H1 (cell line): ENCODE measurements at regions of chr7 and their contacts with region 1.

Region 1: GRCh38 chr7:139557857-139558581 is 34.5 kb downstream of the CLEC2L start:
- DNase-seq: no peak
- H3K4me3 ChIP-seq: no peak overlapping the region
- H3K27ac ChIP-seq: no peak overlapping the region
- H3K4me1 ChIP-seq: peaks cover 0 to 4% (median 2%) of the 10 kb centered on the region in 4 experiments; a peak in 4 of 7 replicates
- H3K27me3 ChIP-seq: no peaks in the 10 kb centered on the region
- CTCF ChIP-seq: peak; percentile 59 to 79 (median 69)
- EP300 ChIP-seq: no peak
- POLR2A ChIP-seq: no peak
- RAD21 ChIP-seq: peak; percentile 36 to 58

Region 2: GRCh38 chr7:139441961-139442360 is 116.1 kb before region 1 on chr7:
- CTCF ChIA-PET with region 1: no interaction called
- POLR2A ChIA-PET with region 1: no interaction called
- DNase-seq: no peak
- H3K4me3 ChIP-seq: no peak overlapping the region
- H3K27ac ChIP-seq: no peak overlapping the region
- H3K4me1 ChIP-seq: no peaks in the 10 kb centered on the region
- H3K27me3 ChIP-seq: no peaks in the 10 kb centered on the region
- CTCF ChIP-seq: no peak
- EP300 ChIP-seq: no peak
- POLR2A ChIP-seq: no peak
- RAD21 ChIP-seq: no peak

Region 3: DNA sequence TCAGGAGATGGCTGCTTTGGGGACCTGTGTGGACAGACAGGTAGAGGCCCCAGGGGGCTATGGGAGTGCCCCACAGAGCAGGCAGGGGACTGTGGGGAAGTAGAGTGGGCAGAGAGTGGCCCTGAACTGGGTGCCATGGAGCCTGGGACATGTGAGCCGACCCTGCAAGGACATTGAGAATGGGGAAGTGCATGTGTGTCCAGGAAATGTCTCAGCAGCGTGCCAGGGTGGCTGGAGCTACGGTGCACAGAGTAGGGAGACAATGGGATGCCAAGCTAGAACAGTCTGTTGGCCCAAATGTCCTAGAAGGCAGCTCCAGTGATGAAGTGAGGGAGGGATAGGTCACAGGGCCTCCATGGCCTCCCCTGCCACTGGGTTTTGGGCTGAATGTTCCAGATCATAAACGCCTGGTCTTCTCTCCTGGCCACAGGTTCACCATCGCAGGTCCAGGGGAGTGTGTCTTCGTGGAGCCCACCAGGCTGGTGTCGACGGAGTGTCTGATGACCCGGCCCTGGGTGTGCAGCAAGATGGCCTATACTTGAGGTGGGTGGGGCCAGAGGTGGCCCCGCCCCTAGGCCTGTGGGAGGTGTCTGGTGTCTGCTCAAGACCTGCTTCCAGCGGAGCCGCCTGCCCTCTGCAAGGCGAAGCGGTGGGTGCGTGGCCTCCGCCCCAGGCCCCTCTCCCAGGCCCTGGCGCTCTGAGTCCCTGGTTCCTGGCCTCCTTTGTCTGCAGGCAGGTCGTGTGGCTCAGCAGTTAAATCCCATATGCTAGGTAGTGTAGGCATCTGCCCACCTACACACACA is 14.0 kb before region 1 on chr7:
- CTCF ChIA-PET with region 1: interaction called, 50 read pairs
- POLR2A ChIA-PET with region 1: no interaction called
- DNase-seq: no peak
- H3K4me3 ChIP-seq: no peak overlapping the region
- H3K27ac ChIP-seq: no peak overlapping the region; the same call in 1 of the 2 replicates
- H3K4me1 ChIP-seq: peaks cover 0 to 10% (median 5%) of the 10 kb centered on the region in 4 experiments; a peak in 5 of 7 replicates
- H3K27me3 ChIP-seq: no peaks in the 10 kb centered on the region; a peak in 1 of 7 replicates
- CTCF ChIP-seq: no peak
- EP300 ChIP-seq: no peak
- POLR2A ChIP-seq: no peak
- RAD21 ChIP-seq: no peak

Region 4: DNA sequence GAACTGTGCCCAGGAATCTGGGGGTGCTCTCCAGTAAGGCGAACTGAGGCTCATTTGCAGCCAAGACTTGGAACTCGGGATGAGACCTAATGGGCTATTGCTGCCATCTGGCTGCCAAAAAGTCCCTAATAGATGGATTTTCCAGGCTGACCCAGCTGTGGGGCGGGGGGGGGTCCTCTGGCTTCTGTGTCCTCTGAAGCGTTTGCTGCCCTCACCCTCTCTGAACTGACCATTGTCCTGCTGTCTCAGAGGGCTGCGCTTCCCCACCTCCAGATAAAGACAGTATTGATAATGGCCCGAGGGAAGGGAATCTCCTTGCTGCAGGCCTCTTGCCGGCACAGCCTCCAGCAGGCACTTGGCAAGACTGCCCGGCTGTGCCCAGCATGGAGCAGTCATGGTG is 12.1 kb after region 1 on chr7:
- CTCF ChIA-PET with region 1: interaction called, 54 read pairs
- POLR2A ChIA-PET with region 1: no interaction called
- DNase-seq: no peak
- H3K4me3 ChIP-seq: no peak overlapping the region
- H3K27ac ChIP-seq: no peak overlapping the region
- H3K4me1 ChIP-seq: peaks cover 0 to 13% (median 3%) of the 10 kb centered on the region in 4 experiments; a peak in 3 of 7 replicates
- H3K27me3 ChIP-seq: no peaks in the 10 kb centered on the region
- CTCF ChIP-seq: peak in 2 of 3 experiments; percentile 18 to 56; a peak in 3 of 4 replicates
- EP300 ChIP-seq: no peak
- POLR2A ChIP-seq: no peak
- RAD21 ChIP-seq: peak; percentile 67 to 74